Ascending aorta (tissue), 2 donors: ENCODE measurements at regions of chr3 and their contacts with region 1.

Region 1: GRCh38 chr3:139533781-139534443 is 5.6 kb downstream of the RBP1 start:
- DNase-seq: peak in 1 of 2 donors; percentile 64
- H3K4me3 ChIP-seq: peak overlapping the region in 1 of 2 donors; percentile 23
- H3K27ac ChIP-seq: peak overlapping the region; percentile 87
- H3K4me1 ChIP-seq: peaks cover 10 to 39% of the 10 kb centered on the region in 2 donors
- H3K27me3 ChIP-seq: no peaks in the 10 kb centered on the region
- CTCF ChIP-seq: no peak

Region 2: DNA sequence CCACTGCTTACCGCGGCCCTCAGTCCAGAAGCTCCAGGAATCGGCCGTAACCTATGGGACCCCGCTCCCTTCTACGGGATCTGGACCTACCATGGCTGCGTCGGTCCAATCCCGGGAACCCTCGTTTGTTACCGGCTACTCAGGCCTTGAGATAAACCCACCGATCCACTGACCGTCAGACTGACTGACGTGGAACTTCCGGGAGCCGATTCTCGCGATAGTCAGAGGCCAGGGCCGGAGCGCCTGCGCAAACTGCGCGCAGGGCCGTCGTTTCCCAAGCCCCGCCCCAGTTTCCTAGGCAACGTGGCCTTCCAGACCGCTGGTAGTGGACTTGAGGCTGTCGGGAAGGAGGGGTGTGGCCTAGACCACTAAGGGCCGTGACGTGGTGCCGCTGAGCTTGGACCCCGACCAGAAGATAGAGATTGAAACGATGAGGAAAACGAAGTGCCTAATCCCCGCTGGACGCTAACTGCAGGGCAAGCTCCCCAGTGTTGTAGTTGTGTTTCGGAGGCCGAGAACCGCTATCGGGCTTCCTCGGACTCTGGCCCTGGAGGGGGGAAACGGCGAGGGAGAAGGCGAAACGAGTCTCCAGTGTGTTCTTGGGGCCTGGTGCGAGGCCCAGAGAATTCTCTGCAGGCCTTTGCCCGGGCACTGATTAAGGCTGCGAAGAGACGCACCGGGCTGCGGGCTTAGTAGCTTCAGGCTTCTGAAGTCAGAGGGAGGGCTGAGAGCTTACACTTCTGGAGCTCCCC is 144.3 kb before region 1 on chr3 and contains the start of gene COPB2:
- intact Hi-C with region 1: loop called (anchors 2 kb)
- DNase-seq: peak; percentile 97 to 100
- H3K4me3 ChIP-seq: peak within 1 kb of the TSS; percentile 98 to 99
- H3K27ac ChIP-seq: peak within 1 kb of the TSS; percentile 96
- H3K4me1 ChIP-seq: peaks cover 3 to 25% of the 10 kb centered on the region in 2 donors
- H3K27me3 ChIP-seq: no peaks in the 10 kb centered on the region
- CTCF ChIP-seq: no peak
- total RNA-seq, gene COPB2: 26.6 TPM

Region 3: GRCh38 chr3:139519998-139520737 is 13.7 kb before region 1 on chr3:
- intact Hi-C with region 1: no loop called
- DNase-seq: no peak
- H3K4me3 ChIP-seq: no peak overlapping the region
- H3K27ac ChIP-seq: no peak overlapping the region
- H3K4me1 ChIP-seq: no peaks in the 10 kb centered on the region
- H3K27me3 ChIP-seq: no peaks in the 10 kb centered on the region
- CTCF ChIP-seq: peak; percentile 5 to 21 (median 15)

Region 4: DNA sequence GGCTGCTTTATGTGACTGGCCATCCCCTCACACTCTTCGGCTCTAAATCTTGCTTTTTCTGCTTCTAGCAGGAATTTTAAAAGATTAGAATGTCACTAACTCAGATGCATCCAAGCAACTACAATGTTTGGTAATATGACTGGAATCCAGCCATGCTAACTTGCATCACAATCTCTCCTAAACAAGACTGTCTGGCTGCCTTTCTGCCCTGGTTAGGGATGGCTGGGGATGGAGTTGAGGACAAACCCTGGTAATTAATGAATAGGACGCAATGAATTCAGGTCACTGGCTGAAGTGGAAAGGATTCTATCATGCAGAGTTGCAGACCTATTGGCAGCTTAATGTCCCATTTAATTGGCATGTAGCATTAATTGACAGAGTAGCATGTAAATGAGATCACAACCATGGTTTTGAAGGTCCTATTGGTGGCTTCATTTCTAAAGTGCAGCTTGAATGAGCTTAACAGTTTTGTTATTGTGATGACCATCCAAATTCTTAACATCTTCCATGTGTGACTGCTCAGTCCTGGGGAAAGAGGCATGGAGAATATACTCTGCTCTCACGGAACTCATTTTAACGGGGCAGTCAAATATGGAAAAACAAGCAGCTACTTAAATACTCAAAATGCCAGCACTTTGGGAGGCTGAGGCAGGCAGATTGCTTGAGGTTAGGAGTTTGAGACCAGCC is 122.1 kb after region 1 on chr3:
- intact Hi-C with region 1: no loop called
- DNase-seq: no peak
- H3K4me3 ChIP-seq: no peak overlapping the region
- H3K27ac ChIP-seq: no peak overlapping the region
- H3K4me1 ChIP-seq: no peaks in the 10 kb centered on the region
- H3K27me3 ChIP-seq: no peaks in the 10 kb centered on the region
- CTCF ChIP-seq: no peak

Region 5: DNA sequence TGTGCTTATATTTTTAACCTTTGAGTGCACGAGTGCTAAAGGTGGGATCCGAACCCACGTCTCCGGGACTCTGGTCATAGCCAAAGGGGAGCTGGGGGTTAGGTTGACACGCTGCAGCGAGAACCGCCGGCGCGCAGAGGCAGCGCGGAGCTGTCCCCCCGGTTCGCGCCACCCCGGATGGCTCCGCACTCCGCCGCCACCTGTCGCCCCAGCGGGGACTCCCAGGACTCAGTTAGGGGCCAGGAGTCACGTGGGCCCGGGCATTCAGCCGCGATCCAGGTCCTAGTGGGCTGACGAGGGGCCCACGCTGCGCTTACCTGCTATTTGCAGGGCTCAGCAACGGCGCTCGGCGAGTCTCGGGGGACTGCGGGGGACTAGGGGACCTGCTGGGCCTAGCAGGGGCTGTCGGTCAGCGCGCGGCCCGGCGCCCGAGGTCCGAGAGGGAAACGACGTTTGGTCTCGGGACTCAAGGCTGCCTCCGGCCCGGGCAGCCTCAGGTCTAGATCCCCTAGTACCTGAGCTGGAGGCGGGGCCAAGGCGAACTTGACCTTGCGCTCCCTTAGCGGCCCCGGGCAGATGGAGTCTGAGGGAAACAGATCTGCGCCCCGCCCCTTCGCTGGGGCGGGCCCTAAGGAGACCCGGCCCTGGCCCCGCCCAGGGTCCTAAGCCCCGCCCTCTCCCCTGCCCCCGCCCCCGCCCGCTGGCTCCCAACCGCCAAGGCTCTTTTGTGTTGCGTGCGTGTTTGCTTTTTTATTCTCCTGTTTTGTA is 143.7 kb after region 1 on chr3 and contains the start of gene NMNAT3:
- intact Hi-C with region 1: loop called (anchors 5 kb)
- DNase-seq: peak; percentile 21 to 88
- H3K4me3 ChIP-seq: peak within 1 kb of the TSS; percentile 84 to 90
- H3K27ac ChIP-seq: peak within 1 kb of the TSS in 1 of 2 donors; percentile 46
- H3K4me1 ChIP-seq: no peaks in the 10 kb centered on the region
- H3K27me3 ChIP-seq: no peaks in the 10 kb centered on the region
- CTCF ChIP-seq: peak in 1 of 3 experiments; percentile 20
- total RNA-seq, gene NMNAT3: 1.2 TPM

Region 6: DNA sequence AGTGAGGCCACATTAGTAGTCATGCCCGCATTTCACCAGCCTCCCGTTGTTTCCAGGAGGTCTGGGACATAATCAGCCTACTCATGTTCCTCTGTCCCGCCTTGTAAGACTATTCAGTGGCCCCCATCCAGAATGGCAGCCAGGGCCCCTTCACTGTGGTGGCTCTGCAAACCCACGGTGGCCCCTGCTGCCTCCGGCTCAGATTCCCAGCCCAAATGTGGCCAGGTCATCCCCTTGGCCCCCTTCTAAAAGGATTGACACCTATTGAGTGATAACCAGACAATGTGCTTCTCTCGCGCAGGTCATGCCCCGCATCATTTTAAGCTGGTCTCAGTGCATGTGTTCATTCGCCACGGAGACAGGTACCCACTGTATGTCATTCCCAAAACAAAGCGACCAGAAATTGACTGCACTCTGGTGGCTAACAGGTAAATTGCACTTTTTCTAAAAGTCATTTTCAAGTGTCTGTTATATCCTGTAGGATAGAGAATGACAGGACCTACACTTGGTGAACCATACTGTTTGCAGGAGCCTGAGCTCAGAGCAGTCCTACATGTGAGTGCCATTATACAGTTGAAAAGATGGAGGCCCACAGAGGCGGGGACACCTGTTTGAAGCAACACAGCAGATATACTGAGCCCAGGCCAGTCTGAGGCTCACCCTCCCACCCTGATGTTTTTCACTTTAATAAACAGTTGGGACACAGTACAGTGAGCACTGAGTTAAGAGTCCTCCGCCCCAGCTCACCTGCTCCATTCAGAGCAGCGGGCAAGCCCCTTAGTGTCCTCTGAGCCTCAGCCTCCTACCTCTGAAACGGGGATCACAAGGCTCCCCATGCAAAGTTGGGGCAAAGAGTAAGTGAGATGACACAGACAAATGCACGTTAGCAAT is 1745.4 kb after region 1 on chr3:
- intact Hi-C with region 1: loop called (anchors 10 kb)
- DNase-seq: peak in 1 of 2 donors; percentile 63
- H3K4me3 ChIP-seq: no peak overlapping the region
- H3K27ac ChIP-seq: peak overlapping the region; percentile 83
- H3K4me1 ChIP-seq: peaks cover 12 to 23% of the 10 kb centered on the region in 2 donors
- H3K27me3 ChIP-seq: no peaks in the 10 kb centered on the region
- CTCF ChIP-seq: peak; percentile 57 to 69 (median 57)